ENCODE measurements at regions of chr2 and their contacts with region 1.

Region 1: GRCh38 chr2:58146707-58147106 is 94.4 kb downstream of the FANCL start:
- DNase-seq: peak; percentile 32
- H3K4me3 Mint-ChIP-seq: no peak overlapping the region
- H3K27ac Mint-ChIP-seq: no peak overlapping the region
- H3K4me1 Mint-ChIP-seq: peaks cover 9% of the 10 kb centered on the region
- H3K27me3 Mint-ChIP-seq: no peaks in the 10 kb centered on the region

Region 2: GRCh38 chr2:57809230-57809629 is 337.5 kb before region 1 on chr2:
- CTCF ChIA-PET with region 1: no interaction called
- intact Hi-C with region 1: no loop called
- DNase-seq: no peak
- H3K4me3 Mint-ChIP-seq: no peak overlapping the region
- H3K27ac Mint-ChIP-seq: no peak overlapping the region
- H3K4me1 Mint-ChIP-seq: no peaks in the 10 kb centered on the region
- H3K27me3 Mint-ChIP-seq: no peaks in the 10 kb centered on the region

Region 3: GRCh38 chr2:57918126-57918525 is 228.6 kb before region 1 on chr2:
- CTCF ChIA-PET with region 1: no interaction called
- intact Hi-C with region 1: loop called (anchors 10 kb)
- DNase-seq: no peak
- H3K4me3 Mint-ChIP-seq: no peak overlapping the region
- H3K27ac Mint-ChIP-seq: no peak overlapping the region
- H3K4me1 Mint-ChIP-seq: no peaks in the 10 kb centered on the region
- H3K27me3 Mint-ChIP-seq: no peaks in the 10 kb centered on the region

Region 4: DNA sequence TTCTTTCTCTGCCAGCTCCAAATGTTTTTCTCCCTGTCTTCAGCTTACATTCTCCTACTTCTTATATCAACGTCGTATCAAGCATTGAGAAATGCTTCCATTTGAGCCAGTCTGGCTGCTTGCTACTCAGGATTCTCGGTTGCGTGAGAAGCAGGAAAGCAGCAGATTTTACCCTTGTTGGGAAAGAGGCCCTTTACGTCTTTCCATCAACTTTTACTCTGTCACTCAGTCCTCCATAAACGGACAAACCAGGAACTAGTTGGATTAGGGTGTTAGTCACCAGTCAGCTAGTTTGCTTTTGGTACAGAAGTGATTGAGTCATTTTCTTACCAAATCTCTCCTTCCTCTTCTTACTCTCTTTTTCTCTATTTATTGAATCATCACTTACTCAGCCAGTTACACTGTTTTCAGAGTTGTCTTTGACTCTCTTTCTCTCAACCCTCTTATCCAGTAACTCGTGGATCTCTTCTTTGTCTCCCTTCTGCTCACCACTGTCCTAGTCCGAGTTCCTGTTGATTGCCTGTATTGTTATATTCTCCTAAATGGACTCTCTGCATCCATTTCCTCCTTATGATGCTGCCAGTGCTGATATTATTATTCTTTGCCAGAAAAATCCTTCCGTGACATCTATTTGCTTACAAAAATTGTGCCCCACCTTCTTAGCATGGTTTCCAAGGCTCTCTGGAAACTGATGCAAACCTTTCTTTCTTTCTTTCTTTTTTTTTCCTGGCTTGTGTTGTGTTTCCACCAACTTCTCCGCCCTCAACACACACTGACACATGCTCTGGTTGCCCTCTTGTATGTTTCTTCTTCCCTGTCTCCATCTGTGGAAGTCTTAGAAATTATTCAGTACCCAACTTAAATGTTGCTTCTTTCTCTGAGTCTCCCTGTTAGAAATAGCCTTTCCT is 38.6 kb before region 1 on chr2:
- CTCF ChIA-PET with region 1: no interaction called
- intact Hi-C with region 1: loop called (anchors 2 kb)
- DNase-seq: no peak
- H3K4me3 Mint-ChIP-seq: no peak overlapping the region
- H3K27ac Mint-ChIP-seq: no peak overlapping the region
- H3K4me1 Mint-ChIP-seq: peaks cover 13% of the 10 kb centered on the region
- H3K27me3 Mint-ChIP-seq: no peaks in the 10 kb centered on the region

Region 5: DNA sequence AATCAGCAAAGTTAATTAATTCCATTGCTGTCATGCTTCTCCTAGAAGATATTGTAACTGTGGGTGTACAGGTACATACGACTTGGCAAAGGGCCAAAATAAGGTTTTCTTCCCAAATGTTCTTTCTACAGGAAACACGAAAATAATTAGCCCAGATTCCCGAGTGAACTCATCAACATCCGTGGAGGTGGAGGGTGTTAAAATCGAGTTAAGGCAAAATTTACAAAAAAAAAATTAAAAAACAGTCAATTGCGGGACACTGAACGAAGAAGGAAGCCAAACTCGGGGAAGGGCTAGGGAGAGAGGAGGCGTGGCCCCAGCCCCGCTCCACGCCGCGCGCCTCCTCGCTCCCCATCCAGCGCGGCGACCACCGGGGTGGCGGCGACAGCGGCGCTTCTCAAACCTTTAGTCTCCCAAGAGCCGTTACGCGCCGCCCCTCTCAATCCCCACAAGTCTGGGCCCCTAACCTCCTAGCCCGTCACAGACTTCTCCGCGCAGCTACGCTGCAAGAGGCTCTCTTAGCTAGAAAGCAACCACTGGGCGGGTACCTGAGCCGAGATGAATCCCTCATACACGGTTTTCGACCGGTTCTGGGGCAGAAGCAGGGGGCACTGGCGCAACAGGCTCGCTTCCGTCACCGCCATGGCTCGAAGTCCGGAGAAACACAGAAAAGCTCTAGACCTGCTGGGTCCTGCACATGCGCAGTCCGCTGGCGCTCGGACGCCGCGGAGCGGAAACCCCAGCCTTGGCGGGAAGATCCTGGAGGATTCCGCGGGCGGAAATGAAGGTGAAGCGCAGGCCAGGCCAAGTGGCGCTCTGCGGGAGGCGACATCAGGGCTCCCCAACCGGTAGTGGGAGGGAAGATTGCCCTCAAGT is 94.2 kb after region 1 on chr2 and contains the start of gene FANCL:
- CTCF ChIA-PET with region 1: no interaction called
- intact Hi-C with region 1: loop called (anchors 1 kb)
- DNase-seq: peak; percentile 81
- H3K4me3 Mint-ChIP-seq: peak within 1 kb of the TSS; percentile 84
- H3K27ac Mint-ChIP-seq: peak within 1 kb of the TSS; percentile 82
- H3K4me1 Mint-ChIP-seq: peaks cover 26% of the 10 kb centered on the region
- H3K27me3 Mint-ChIP-seq: peaks cover 15% of the 10 kb centered on the region
- total RNA-seq, gene FANCL: 14.3 to 16.3 TPM

Measured in activated naive CD4-positive, alpha-beta T cell treated with anti-CD3 and anti-CD28 coated beads for 36 hours (primary cell).